Astrocyte of the cerebellum (primary cell): ENCODE measurements at regions of chr2 and their contacts with region 1.

Region 1: GRCh38 chr2:7118606-7119503 is 201.6 kb downstream of the RNF144A start:
- DNase-seq: peak; percentile 32
- H3K4me3 ChIP-seq: no peak overlapping the region
- CTCF ChIP-seq: peak; percentile 74

Region 2: GRCh38 chr2:6845312-6845711 is 273.5 kb before region 1 on chr2:
- in situ Hi-C with region 1: no loop called
- DNase-seq: no peak
- H3K4me3 ChIP-seq: no peak overlapping the region
- CTCF ChIP-seq: no peak

Region 3: GRCh38 chr2:7165736-7166135 is 46.9 kb after region 1 on chr2:
- in situ Hi-C with region 1: no loop called
- DNase-seq: no peak
- H3K4me3 ChIP-seq: no peak overlapping the region
- CTCF ChIP-seq: no peak

Region 4: DNA sequence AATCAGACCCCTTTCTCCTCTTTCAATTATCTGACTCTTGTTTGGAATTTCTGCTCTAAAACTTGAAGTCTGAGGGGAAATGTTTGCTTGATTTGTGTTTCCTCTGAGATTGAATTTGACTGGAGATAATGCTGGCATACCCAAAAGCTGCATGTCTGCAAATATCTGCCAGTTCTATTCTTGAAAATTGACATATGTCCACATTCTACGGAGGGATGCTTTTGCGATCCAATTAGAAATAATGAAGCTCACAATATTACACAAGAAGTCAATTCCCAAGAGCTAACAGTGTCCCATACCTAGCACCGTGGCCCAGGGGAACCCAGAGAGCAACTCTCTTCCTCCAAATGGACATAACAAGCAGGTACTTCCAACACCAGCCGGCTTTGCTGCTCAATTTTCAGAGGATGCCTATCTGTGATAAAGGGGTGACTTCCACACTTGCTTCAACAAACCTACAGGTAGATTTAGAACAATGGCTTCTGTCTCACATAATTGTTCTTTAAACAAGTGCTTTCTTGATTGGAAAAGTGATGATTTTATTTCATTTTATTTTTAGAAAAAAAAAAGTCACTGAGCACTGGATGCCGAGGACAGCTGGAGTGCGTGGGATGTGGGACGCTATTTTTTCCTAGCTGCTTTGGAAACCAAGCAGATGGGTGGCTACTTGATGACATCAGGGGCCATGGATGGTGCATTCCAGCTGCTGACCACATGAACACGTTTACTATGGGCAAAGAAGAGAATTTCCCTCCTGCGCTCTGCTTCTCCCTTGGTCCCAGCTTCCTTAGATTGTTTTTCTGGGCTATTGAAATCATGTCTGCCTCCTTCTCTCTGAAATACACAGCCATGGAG is 287.2 kb after region 1 on chr2:
- in situ Hi-C with region 1: loop called (anchors 25 kb)
- DNase-seq: no peak
- H3K4me3 ChIP-seq: no peak overlapping the region
- CTCF ChIP-seq: no peak